HepG2 (cell line): ENCODE measurements at regions of chr10 and their contacts with region 1.

Region 1: GRCh38 chr10:33939892-33940291 is 605.4 kb upstream of the NRP1 start:
- DNase-seq: no peak
- ATAC-seq: no peak
- H3K4me3 ChIP-seq: no peak overlapping the region
- H3K27ac ChIP-seq: no peak overlapping the region
- H3K4me1 ChIP-seq: peaks cover 8% of the 10 kb centered on the region
- H3K27me3 ChIP-seq: no peaks in the 10 kb centered on the region
- CTCF ChIP-seq: no peak
- EP300 ChIP-seq: no peak
- POLR2A ChIP-seq: no peak
- RAD21 ChIP-seq: no peak

Region 2: GRCh38 chr10:33832124-33832787 is 107.6 kb before region 1 on chr10:
- CTCF ChIA-PET with region 1: no interaction called
- POLR2A ChIA-PET with region 1: no interaction called
- in situ Hi-C with region 1: no loop called
- intact Hi-C with region 1: loop called (anchors 10 kb)
- DNase-seq: peak; percentile 89
- ATAC-seq: peak; percentile 84
- H3K4me3 ChIP-seq: peak overlapping the region in 1 of 3 experiments; percentile 2; a peak in 1 of 6 replicates
- H3K27ac ChIP-seq: peak overlapping the region; percentile 63
- H3K4me1 ChIP-seq: peaks cover 36% of the 10 kb centered on the region
- H3K27me3 ChIP-seq: no peaks in the 10 kb centered on the region
- CTCF ChIP-seq: no peak
- EP300 ChIP-seq: peak in 1 of 2 experiments; percentile 73; a peak in 2 of 4 replicates
- POLR2A ChIP-seq: no peak
- RAD21 ChIP-seq: no peak

Region 3: DNA sequence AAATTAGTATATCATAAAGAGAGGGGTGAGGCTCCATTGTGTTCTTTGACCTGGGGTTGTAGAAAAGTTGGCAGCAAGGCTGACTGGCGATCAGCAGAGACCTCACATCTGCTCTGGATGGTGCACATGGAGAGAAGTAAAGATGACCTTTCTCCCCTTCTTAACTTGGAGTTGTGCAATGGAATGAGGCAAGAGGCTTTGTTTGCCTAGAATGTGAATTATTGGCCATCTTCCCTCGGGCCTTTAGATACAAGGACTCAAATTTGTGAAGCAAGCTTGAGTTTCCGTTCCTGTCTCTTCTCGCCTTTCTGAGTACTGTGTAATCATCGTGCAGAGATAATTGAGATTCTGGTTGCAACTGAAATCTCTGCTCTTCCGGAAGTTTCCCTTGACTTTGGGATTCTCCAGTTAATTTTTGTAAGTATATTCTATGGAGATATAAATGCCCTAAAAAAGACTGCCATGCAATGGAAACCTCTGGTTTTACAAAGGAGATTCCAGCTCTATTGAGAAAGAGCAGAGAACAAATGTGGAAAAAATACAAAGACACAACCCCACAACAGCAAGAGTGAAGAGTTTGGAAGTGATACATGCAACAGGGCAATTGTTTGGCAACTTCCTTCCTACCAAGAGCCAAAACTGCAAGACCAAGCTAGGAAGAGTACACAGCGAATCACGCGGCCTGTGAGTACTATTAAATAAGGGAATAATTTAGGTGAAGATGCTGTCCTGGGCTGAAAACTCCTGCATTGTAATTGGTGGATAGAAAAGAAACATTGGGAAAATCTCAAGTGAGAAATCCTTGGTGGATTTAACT is 63.1 kb before region 1 on chr10:
- CTCF ChIA-PET with region 1: no interaction called
- POLR2A ChIA-PET with region 1: no interaction called
- in situ Hi-C with region 1: no loop called
- intact Hi-C with region 1: loop called (anchors 10 kb)
- DNase-seq: peak; percentile 68
- ATAC-seq: peak; percentile 91
- H3K4me3 ChIP-seq: peak overlapping the region in 2 of 3 experiments; percentile 24 to 36; a peak in 3 of 6 replicates
- H3K27ac ChIP-seq: peak overlapping the region; percentile 55
- H3K4me1 ChIP-seq: peaks cover 25% of the 10 kb centered on the region
- H3K27me3 ChIP-seq: no peaks in the 10 kb centered on the region
- CTCF ChIP-seq: no peak
- EP300 ChIP-seq: peak in 1 of 2 experiments; percentile 89; a peak in 2 of 4 replicates
- POLR2A ChIP-seq: no peak
- RAD21 ChIP-seq: no peak

Region 4: DNA sequence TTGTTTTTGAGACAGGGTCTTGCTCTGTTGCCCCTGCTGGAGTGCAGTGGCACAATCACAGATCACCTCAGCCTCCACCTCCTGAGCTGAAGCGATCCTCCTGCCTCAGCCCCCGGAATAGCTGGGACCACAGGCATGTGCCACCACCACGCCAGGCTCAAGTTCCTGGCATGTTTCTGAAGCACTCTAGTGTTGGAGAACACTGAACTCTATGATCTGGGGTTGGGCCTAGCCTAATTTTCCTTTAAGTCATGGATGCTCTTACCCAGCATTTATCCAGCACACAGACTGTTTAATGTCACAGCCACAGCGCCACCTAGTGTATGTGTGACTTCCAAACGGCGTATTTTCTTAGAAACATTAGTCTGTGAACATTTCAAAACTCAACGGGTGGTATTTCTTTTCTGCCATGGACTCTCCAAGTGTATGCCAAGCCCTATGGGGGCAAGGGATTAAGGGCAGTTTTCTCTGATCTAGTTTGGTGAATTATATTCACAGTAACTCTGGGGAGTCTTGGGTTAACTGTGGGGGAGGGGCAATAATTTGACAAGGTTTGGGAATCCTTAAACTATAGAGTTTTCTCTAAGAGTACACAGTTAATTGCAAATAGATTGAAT is 1278.6 kb after region 1 on chr10:
- CTCF ChIA-PET with region 1: no interaction called
- POLR2A ChIA-PET with region 1: no interaction called
- in situ Hi-C with region 1: no loop called
- intact Hi-C with region 1: no loop called
- DNase-seq: peak; percentile 77
- ATAC-seq: peak; percentile 62
- H3K4me3 ChIP-seq: no peak overlapping the region
- H3K27ac ChIP-seq: no peak overlapping the region
- H3K4me1 ChIP-seq: peaks cover 61% of the 10 kb centered on the region
- H3K27me3 ChIP-seq: no peaks in the 10 kb centered on the region
- CTCF ChIP-seq: peak; percentile 83
- EP300 ChIP-seq: no peak
- POLR2A ChIP-seq: no peak
- RAD21 ChIP-seq: peak; percentile 45; the same call in 1 of the 2 replicates